ENCODE measurements at regions of chr11 and their contacts with region 1.

Region 1: GRCh38 chr11:102940714-102941588 is 14.6 kb downstream of the MMP13 start:
- DNase-seq: peak in 7 of 9 donors; percentile 4 to 35 (median 29)
- ATAC-seq: peak; percentile 76
- H3K4me3 ChIP-seq: no peak overlapping the region
- H3K4me3 Mint-ChIP-seq: no peak overlapping the region
- H3K27ac ChIP-seq: no peak overlapping the region
- H3K27ac Mint-ChIP-seq: peak overlapping the region in 1 of 9 donors; percentile 52
- H3K4me1 ChIP-seq: no peaks in the 10 kb centered on the region
- H3K4me1 Mint-ChIP-seq: peaks cover 0 to 5% (median 0%) of the 10 kb centered on the region in 7 donors
- H3K27me3 ChIP-seq: no peaks in the 10 kb centered on the region
- H3K27me3 Mint-ChIP-seq: peaks cover 8 to 16% (median 9%) of the 10 kb centered on the region in 5 donors

Region 2: DNA sequence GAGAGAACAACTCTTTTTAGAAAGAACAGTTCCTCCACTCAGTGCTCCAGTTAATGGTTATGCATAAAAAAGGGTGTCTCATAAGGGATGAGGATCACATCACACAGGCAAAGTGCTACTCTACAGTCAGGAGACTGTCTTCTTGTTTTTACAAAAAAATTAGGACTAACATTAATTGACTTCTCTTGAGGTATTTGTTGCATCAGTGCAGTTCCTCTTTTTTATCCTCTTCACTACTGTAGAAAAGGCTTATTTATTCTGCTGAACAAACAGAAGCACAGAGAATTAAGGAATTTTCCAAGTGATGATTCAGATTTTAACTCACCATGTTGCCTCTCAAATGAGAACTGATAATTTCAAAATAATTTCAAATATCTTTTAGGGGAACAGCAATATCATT is 218.1 kb before region 1 on chr11:
- CTCF ChIA-PET with region 1: no interaction called
- POLR2A ChIA-PET with region 1: no interaction called
- intact Hi-C with region 1: no loop called
- DNase-seq: no peak
- ATAC-seq: peak; percentile 63
- H3K4me3 ChIP-seq: no peak overlapping the region
- H3K4me3 Mint-ChIP-seq: no peak overlapping the region
- H3K27ac ChIP-seq: no peak overlapping the region
- H3K27ac Mint-ChIP-seq: no peak overlapping the region
- H3K4me1 ChIP-seq: no peaks in the 10 kb centered on the region
- H3K4me1 Mint-ChIP-seq: peaks cover 0 to 4% (median 0%) of the 10 kb centered on the region in 7 donors
- H3K27me3 ChIP-seq: no peaks in the 10 kb centered on the region
- H3K27me3 Mint-ChIP-seq: peaks cover 5 to 19% (median 9%) of the 10 kb centered on the region in 5 donors

Region 3: GRCh38 chr11:102733232-102733875 is 207.6 kb before region 1 on chr11:
- CTCF ChIA-PET with region 1: no interaction called
- POLR2A ChIA-PET with region 1: no interaction called
- intact Hi-C with region 1: loop called in 1 of 2 experiments (anchors 1 kb)
- DNase-seq: peak in 1 of 9 donors; percentile 45
- ATAC-seq: peak; percentile 66
- H3K4me3 ChIP-seq: no peak overlapping the region
- H3K4me3 Mint-ChIP-seq: no peak overlapping the region
- H3K27ac ChIP-seq: no peak overlapping the region
- H3K27ac Mint-ChIP-seq: no peak overlapping the region
- H3K4me1 ChIP-seq: no peaks in the 10 kb centered on the region
- H3K4me1 Mint-ChIP-seq: no peaks in the 10 kb centered on the region
- H3K27me3 ChIP-seq: peaks cover 0 to 3% of the 10 kb centered on the region in 2 donors
- H3K27me3 Mint-ChIP-seq: peaks cover 18 to 38% (median 28%) of the 10 kb centered on the region in 5 donors

Region 4: GRCh38 chr11:102914238-102915043 is 26.5 kb before region 1 on chr11:
- CTCF ChIA-PET with region 1: no interaction called
- POLR2A ChIA-PET with region 1: no interaction called
- intact Hi-C with region 1: loop called in 1 of 2 experiments (anchors 2 kb)
- DNase-seq: no peak
- ATAC-seq: no peak
- H3K4me3 ChIP-seq: no peak overlapping the region
- H3K4me3 Mint-ChIP-seq: no peak overlapping the region
- H3K27ac ChIP-seq: no peak overlapping the region
- H3K27ac Mint-ChIP-seq: no peak overlapping the region
- H3K4me1 ChIP-seq: no peaks in the 10 kb centered on the region
- H3K4me1 Mint-ChIP-seq: no peaks in the 10 kb centered on the region
- H3K27me3 ChIP-seq: no peaks in the 10 kb centered on the region
- H3K27me3 Mint-ChIP-seq: peaks cover 7 to 17% (median 12%) of the 10 kb centered on the region in 5 donors